PC-9 (cell line): ENCODE measurements at regions of chr20 and their contacts with region 1.

Region 1: DNA sequence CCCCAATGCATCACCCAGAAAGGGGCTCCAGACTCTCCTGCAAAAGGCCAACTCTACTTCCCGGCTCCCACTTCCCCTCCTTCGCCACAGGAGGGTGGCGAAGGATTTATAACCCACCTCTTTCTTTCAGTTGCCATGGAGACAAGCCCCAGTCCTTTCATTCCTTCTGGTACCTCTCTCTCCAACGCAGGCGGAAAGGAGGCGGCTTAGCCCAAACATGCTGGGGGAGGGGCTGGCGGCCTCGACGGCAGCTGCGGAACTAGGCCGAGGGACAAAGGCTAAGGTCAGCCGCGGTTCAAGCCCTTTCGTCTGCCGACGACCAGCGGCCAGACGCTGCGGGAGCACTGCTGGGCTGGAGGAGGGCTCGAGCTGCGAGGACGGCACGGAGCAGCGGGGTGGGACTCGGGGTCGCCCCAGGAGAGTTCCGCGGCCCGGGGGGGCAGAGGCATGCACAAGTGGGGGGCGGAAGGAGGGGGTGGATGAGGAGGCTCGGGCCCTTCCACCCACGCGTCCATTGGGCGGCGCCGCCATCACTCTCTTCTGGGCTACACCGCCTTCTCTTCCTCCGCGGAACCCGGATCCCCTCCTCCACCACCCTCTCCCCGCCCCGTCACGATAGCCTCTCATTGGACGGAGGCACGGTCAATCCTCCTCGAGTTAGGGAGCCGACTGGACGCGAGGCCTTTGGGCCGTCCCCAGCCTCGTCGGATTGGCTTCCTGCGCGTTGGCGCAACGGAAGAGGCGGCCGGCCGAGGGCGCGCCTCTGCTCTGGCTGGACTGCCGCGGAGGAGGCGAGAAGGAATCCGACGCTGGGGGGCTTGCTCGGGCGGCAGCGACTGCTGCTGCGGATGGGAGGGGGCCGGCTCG is at the start of gene PANK2:
- DNase-seq: peak; percentile 95 to 99
- H3K4me3 ChIP-seq: peak within 1 kb of the TSS; percentile 71
- H3K27ac ChIP-seq: peak within 1 kb of the TSS; percentile 38
- H3K4me1 ChIP-seq: peaks cover 41% of the 10 kb centered on the region
- H3K27me3 ChIP-seq: no peaks in the 10 kb centered on the region
- CTCF ChIP-seq: no peak; the same call in 1 of the 2 replicates
- total RNA-seq, gene PANK2: 51.6 and 54.5 TPM in 2 replicates

Region 2: GRCh38 chr20:2883726-2884637 is 1004.9 kb before region 1 on chr20:
- CTCF ChIA-PET with region 1: no interaction called
- POLR2A ChIA-PET with region 1: no interaction called
- intact Hi-C with region 1: no loop called
- DNase-seq: no peak
- H3K4me3 ChIP-seq: no peak overlapping the region
- H3K27ac ChIP-seq: no peak overlapping the region
- H3K4me1 ChIP-seq: peaks cover 4% of the 10 kb centered on the region
- H3K27me3 ChIP-seq: no peaks in the 10 kb centered on the region
- CTCF ChIP-seq: no peak

Region 3: GRCh38 chr20:3854462-3854871 is 34.4 kb before region 1 on chr20:
- CTCF ChIA-PET with region 1: no interaction called
- POLR2A ChIA-PET with region 1: interaction called, 13 read pairs
- intact Hi-C with region 1: no loop called
- DNase-seq: peak; percentile 25 to 62
- H3K4me3 ChIP-seq: no peak overlapping the region
- H3K27ac ChIP-seq: peak overlapping the region; percentile 11; the same call in 1 of the 2 replicates
- H3K4me1 ChIP-seq: peaks cover 7% of the 10 kb centered on the region; the same call in 1 of the 2 replicates
- H3K27me3 ChIP-seq: no peaks in the 10 kb centered on the region
- CTCF ChIP-seq: no peak

Region 4: GRCh38 chr20:3901028-3901705 is 12.3 kb after region 1 on chr20:
- CTCF ChIA-PET with region 1: no interaction called
- POLR2A ChIA-PET with region 1: no interaction called
- intact Hi-C with region 1: no loop called
- DNase-seq: no peak
- H3K4me3 ChIP-seq: no peak overlapping the region
- H3K27ac ChIP-seq: peak overlapping the region; percentile 24
- H3K4me1 ChIP-seq: peaks cover 17% of the 10 kb centered on the region
- H3K27me3 ChIP-seq: no peaks in the 10 kb centered on the region
- CTCF ChIP-seq: no peak

Region 5: GRCh38 chr20:4108495-4109306 is 219.8 kb after region 1 on chr20:
- CTCF ChIA-PET with region 1: no interaction called
- POLR2A ChIA-PET with region 1: no interaction called
- intact Hi-C with region 1: no loop called
- DNase-seq: peak; percentile 68 to 72
- H3K4me3 ChIP-seq: no peak overlapping the region; the same call in 1 of the 2 replicates
- H3K27ac ChIP-seq: peak overlapping the region; percentile 65
- H3K4me1 ChIP-seq: peaks cover 40% of the 10 kb centered on the region
- H3K27me3 ChIP-seq: no peaks in the 10 kb centered on the region
- CTCF ChIP-seq: peak; percentile 97